Activated CD8-positive, alpha-beta T cell treated with anti-CD3 and anti-CD28 coated beads, Interleukin-2, amount 10 ng/mL, durations not matched to agents 7 days and 5 days (primary cell): ENCODE measurements at regions of chr5 and their contacts with region 1.

Region 1: GRCh38 chr5:52776116-52776515 is 11.6 kb upstream of the ITGA1 start:
- DNase-seq: peak; percentile 71
- ATAC-seq: peak; percentile 78
- H3K4me3 Mint-ChIP-seq: peak overlapping the region; percentile 61
- H3K27ac Mint-ChIP-seq: peak overlapping the region; percentile 90
- H3K4me1 Mint-ChIP-seq: peaks cover 59% of the 10 kb centered on the region
- H3K27me3 Mint-ChIP-seq: no peaks in the 10 kb centered on the region

Region 2: DNA sequence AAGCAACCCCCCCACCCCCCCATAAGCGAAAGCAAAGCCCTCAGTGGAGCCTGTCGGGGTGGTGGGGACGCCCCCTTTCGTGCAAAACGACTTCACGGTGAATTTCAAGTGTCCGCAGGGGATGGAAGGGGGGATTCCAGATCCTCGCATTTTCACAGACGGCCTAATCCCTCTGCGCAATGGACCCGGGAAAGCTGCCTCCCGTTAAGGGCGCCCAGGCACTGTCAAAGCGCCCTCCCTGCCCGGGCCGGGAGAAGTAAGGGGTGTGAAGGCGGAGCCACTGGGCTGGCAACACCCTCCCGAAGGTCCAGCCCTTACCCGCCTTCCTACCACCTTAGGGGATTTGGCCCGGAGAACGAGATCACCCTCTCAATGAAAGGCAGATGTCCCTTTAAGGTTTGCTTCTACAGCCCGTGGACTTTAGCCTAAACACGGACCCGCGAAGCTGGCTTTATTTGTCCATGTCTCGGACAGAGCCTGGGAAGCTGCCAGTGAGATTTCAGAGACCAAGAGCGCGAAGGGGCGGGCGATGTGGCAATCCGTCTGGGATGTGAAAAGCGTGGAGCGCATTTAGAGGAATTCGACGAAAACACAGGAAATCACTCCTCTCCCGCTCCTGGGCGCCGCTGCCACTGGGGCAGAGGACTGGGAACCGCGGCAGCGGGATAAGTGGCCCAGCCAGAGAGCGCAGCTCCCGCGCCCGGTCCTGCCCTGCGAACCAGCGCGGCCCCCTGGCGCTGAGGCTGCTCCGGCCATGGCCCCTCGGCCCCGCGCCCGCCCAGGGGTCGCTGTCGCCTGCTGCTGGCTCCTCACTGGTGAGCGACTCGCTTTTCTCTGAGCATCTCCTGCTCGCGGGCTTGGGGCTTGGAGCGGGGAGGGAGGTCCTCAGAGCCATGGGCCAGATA is 11.7 kb after region 1 on chr5 and contains the starts of genes ITGA1 and PELO:
- CTCF ChIA-PET with region 1: interaction called, 12 read pairs
- POLR2A ChIA-PET with region 1: interaction called, 4 read pairs
- DNase-seq: peak; percentile 64
- ATAC-seq: peak; percentile 95
- H3K4me3 Mint-ChIP-seq: peak within 1 kb of the TSS; percentile 92
- H3K27ac Mint-ChIP-seq: peak within 1 kb of the TSS; percentile 88
- H3K4me1 Mint-ChIP-seq: peaks cover 47% of the 10 kb centered on the region
- H3K27me3 Mint-ChIP-seq: no peaks in the 10 kb centered on the region
- total RNA-seq, gene ITGA1: 18.0 to 19.2 TPM
- total RNA-seq, gene PELO: 22.9 to 25.7 TPM